Activated T-helper 2 cell treated with anti-CD3 and anti-CD28 coated beads, Interferon-gamma antibody, Interleukin-2, Interleukin-4, amounts not matched to agents 10 μg/mL and 5 μg/mL and 100 μg/mL, durations not matched to agents 14 hours and 24 hours and 36 hours (primary cell): ENCODE measurements at regions of chr12 and their contacts with region 1.

Region 1: DNA sequence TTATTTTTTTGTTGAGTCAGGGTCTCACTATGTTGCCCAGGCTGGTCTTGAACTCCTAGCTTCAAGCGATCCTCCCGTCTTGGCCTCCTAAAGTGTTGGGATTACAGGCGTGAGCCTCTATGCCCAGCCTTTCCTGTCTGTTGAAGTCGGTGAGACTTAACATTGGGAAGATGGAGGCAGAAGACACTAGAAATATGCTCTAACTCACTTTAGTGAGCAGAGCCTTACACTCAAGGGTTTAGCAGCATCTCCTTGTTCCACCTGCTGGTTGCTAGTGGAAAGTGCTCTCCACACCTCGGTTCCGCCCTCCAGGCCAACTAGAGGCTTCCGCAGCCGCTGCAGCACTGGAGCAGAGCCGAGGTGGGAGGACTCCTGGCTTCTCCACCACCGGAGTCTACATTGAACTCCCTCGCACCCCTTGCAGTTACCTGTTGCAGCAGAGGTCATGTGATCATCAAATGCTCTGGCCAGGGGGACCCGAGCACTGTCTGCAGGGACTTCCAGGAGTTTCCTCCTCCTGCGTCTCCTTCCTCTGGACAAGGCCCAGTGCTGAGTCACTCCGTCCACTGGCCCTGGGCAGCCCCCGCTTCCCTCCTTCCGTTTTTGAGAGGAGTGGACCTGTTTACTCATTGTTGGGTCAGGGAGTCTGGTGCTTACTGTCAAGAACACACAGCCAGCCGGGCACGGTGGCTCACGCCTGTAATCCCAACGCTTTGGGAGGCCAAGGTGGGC is 9.4 kb upstream of the HVCN1 start:
- DNase-seq: peak; percentile 77
- H3K4me3 Mint-ChIP-seq: no peak overlapping the region
- H3K27ac Mint-ChIP-seq: peak overlapping the region; percentile 72
- H3K4me1 Mint-ChIP-seq: peaks cover 15% of the 10 kb centered on the region
- H3K27me3 Mint-ChIP-seq: no peaks in the 10 kb centered on the region

Region 2: GRCh38 chr12:110508071-110508586 is 190.2 kb before region 1 on chr12:
- intact Hi-C with region 1: loop called (anchors 1 kb)
- DNase-seq: no peak
- H3K4me3 Mint-ChIP-seq: no peak overlapping the region
- H3K27ac Mint-ChIP-seq: no peak overlapping the region
- H3K4me1 Mint-ChIP-seq: no peaks in the 10 kb centered on the region
- H3K27me3 Mint-ChIP-seq: peaks cover 2% of the 10 kb centered on the region

Region 3: GRCh38 chr12:110619534-110619953 is 78.8 kb before region 1 on chr12:
- intact Hi-C with region 1: loop called (anchors 1 kb)
- DNase-seq: no peak
- H3K4me3 Mint-ChIP-seq: peak overlapping the region; percentile 30
- H3K27ac Mint-ChIP-seq: peak overlapping the region; percentile 64
- H3K4me1 Mint-ChIP-seq: peaks cover 12% of the 10 kb centered on the region
- H3K27me3 Mint-ChIP-seq: no peaks in the 10 kb centered on the region

Region 4: GRCh38 chr12:110647631-110648040 is 50.7 kb before region 1 on chr12:
- intact Hi-C with region 1: no loop called
- DNase-seq: no peak
- H3K4me3 Mint-ChIP-seq: no peak overlapping the region
- H3K27ac Mint-ChIP-seq: peak overlapping the region; percentile 65
- H3K4me1 Mint-ChIP-seq: peaks cover 20% of the 10 kb centered on the region
- H3K27me3 Mint-ChIP-seq: no peaks in the 10 kb centered on the region